PC-9 (cell line): ENCODE measurements at regions of chr5 and their contacts with region 1.

Region 1: DNA sequence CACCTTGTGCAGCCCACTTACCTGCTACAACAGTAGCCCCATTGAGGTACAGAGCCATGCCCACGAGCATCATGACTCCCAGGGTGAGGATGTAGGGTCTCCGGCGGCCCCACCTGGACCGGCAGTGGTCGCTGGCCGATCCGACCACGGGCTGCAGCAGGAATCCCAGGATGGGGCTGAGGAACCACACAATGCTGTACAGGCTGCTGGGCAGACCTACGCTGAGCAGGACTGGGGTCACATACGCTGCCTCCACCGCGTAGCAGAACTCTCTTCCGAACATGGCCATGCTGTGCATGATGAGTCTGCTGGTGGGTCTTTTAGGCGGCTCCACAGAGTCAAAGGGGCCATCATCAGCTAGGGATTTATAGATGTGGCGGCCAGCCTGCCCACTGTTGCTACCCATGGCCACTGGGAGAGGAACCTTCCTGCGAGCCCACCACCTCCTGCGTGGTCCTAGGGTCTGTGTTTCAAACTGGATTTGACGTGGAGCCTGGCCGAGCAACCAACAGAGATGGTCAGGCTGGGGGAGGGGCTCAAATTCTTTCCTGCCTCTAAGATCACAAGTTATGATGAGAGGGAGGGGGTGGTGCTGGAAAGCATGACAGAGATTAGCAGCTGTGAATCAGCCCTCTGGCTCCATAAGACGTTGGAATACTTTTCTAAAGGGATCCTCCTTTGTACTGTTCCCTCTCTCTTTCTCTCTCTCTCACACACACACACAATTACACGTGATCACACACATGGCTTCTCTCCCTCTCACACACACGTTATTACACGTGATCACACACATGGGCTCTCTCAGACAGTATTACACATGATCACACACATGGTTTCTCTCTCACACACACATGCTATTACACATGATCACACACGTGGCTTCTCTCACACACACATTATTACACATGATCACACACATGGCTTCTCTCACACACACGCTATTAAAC is at the start of gene SLC45A2:
- DNase-seq: no peak
- H3K4me3 ChIP-seq: no peak within 1 kb of the TSS
- H3K27ac ChIP-seq: no peak within 1 kb of the TSS
- H3K4me1 ChIP-seq: no peaks in the 10 kb centered on the region
- H3K27me3 ChIP-seq: no peaks in the 10 kb centered on the region
- CTCF ChIP-seq: no peak
- total RNA-seq, gene SLC45A2: 0.20 and 0.33 TPM in 2 replicates

Region 2: GRCh38 chr5:33761139-33761538 is 223.3 kb before region 1 on chr5:
- CTCF ChIA-PET with region 1: no interaction called
- POLR2A ChIA-PET with region 1: interaction called, 11 read pairs
- intact Hi-C with region 1: no loop called
- DNase-seq: peak in 1 of 2 experiments; percentile 16
- H3K4me3 ChIP-seq: no peak overlapping the region
- H3K27ac ChIP-seq: no peak overlapping the region
- H3K4me1 ChIP-seq: peaks cover 7% of the 10 kb centered on the region; the same call in 1 of the 2 replicates
- H3K27me3 ChIP-seq: no peaks in the 10 kb centered on the region
- CTCF ChIP-seq: no peak